ENCODE measurements at regions of chr1 and their contacts with region 1.

Region 1: GRCh38 chr1:236795035-236795756 is at the start of gene MTR:
- DNase-seq: peak; percentile 91 to 98 (median 95)
- ATAC-seq: peak; percentile 91
- H3K4me3 ChIP-seq: peak within 1 kb of the TSS; percentile 89
- H3K4me3 Mint-ChIP-seq: peak within 1 kb of the TSS; percentile 92
- H3K27ac ChIP-seq: peak within 1 kb of the TSS; percentile 88 to 99
- H3K27ac Mint-ChIP-seq: peak within 1 kb of the TSS; percentile 97
- H3K4me1 ChIP-seq: peaks cover 23% of the 10 kb centered on the region
- H3K4me1 Mint-ChIP-seq: peaks cover 48% of the 10 kb centered on the region
- H3K27me3 ChIP-seq: peaks cover 0 to 4% of the 10 kb centered on the region in 2 experiments
- H3K27me3 Mint-ChIP-seq: peaks cover 9% of the 10 kb centered on the region
- CTCF ChIP-seq: no peak
- total RNA-seq, gene MTR: 35.2 to 37.0 TPM

Region 2: DNA sequence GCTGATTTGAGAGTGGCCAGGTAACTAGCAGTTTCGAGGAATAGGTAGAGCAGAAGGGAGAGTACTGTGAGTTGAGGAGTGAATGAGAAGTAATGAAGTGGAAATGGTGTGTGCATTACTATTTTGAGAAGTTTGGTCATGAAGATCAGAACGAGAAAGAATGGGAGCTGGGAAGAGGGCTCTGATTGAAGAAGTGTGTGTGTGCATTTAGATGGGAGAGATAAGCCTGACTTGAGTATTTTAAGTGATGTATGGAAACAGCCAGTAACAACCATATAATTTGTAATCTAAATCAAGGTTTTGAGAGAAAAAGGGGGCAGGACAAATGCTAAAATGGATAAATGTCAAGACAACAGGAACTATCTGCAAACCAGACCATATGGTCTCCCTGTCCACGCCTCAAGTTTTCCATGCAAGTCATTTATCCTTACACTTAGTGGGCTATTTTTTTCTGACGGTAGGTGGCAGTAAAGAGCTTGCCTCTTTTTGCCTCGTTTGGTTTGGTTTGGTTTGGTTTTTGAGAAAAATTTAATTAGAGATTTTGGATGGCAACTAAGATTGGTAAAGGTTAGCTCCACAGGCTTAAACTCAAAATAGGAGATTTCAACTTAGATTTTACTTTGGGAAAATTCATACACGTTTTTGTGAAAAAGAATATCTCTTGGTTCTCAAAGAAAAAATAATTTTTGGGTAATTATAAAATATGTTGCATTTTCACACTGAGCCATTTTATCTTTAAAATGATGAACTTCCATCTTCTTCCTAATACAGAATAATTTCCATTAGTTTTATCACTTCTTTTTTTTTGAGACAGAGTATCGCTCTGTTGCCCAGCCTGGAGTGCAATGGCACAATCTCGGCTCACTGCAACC is 1281.5 kb before region 1 on chr1:
- CTCF ChIA-PET with region 1: no interaction called
- POLR2A ChIA-PET with region 1: no interaction called
- intact Hi-C with region 1: loop called in 1 of 2 experiments (anchors 10 kb)
- DNase-seq: peak in 6 of 14 experiments; percentile 5 to 82 (median 62)
- ATAC-seq: peak; percentile 68
- H3K4me3 ChIP-seq: no peak overlapping the region
- H3K4me3 Mint-ChIP-seq: no peak overlapping the region
- H3K27ac ChIP-seq: no peak overlapping the region
- H3K27ac Mint-ChIP-seq: no peak overlapping the region
- H3K4me1 ChIP-seq: no peaks in the 10 kb centered on the region
- H3K4me1 Mint-ChIP-seq: no peaks in the 10 kb centered on the region
- H3K27me3 ChIP-seq: no peaks in the 10 kb centered on the region
- H3K27me3 Mint-ChIP-seq: peaks cover 4% of the 10 kb centered on the region
- CTCF ChIP-seq: peak; percentile 91

Region 3: DNA sequence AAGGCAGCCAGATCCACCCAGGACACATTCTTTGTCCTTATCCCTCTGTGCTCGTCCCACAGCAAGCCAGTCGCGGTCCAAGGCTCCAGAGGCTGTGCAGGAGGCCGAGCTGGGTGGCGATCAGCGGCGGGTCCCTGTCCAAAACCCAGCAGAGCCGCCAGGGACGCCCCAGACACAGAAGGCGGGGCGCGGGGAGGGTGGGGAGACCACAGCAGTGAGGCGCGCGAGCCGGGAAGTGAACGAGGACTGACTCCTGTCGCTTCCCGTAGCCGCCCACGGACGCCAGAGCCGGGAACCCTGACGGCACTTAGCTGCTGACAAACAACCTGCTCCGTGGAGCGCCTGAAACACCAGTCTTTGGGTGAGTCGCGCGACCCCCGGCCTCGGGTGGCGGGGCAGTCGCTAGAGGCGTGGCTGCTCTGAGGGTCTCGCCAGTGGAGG is 271.5 kb before region 1 on chr1 and contains the start of gene LGALS8:
- CTCF ChIA-PET with region 1: no interaction called
- POLR2A ChIA-PET with region 1: interaction called, 3 read pairs
- intact Hi-C with region 1: loop called in 1 of 2 experiments (anchors 5 kb)
- DNase-seq: peak; percentile 73 to 92 (median 83)
- ATAC-seq: peak; percentile 80
- H3K4me3 ChIP-seq: peak within 1 kb of the TSS; percentile 82
- H3K4me3 Mint-ChIP-seq: peak within 1 kb of the TSS; percentile 99
- H3K27ac ChIP-seq: peak within 1 kb of the TSS; percentile 82 to 85
- H3K27ac Mint-ChIP-seq: peak within 1 kb of the TSS; percentile 97
- H3K4me1 ChIP-seq: peaks cover 12% of the 10 kb centered on the region
- H3K4me1 Mint-ChIP-seq: peaks cover 40% of the 10 kb centered on the region
- H3K27me3 ChIP-seq: no peaks in the 10 kb centered on the region
- H3K27me3 Mint-ChIP-seq: no peaks in the 10 kb centered on the region
- CTCF ChIP-seq: no peak
- total RNA-seq, gene LGALS8: 138 to 144 TPM

Region 4: DNA sequence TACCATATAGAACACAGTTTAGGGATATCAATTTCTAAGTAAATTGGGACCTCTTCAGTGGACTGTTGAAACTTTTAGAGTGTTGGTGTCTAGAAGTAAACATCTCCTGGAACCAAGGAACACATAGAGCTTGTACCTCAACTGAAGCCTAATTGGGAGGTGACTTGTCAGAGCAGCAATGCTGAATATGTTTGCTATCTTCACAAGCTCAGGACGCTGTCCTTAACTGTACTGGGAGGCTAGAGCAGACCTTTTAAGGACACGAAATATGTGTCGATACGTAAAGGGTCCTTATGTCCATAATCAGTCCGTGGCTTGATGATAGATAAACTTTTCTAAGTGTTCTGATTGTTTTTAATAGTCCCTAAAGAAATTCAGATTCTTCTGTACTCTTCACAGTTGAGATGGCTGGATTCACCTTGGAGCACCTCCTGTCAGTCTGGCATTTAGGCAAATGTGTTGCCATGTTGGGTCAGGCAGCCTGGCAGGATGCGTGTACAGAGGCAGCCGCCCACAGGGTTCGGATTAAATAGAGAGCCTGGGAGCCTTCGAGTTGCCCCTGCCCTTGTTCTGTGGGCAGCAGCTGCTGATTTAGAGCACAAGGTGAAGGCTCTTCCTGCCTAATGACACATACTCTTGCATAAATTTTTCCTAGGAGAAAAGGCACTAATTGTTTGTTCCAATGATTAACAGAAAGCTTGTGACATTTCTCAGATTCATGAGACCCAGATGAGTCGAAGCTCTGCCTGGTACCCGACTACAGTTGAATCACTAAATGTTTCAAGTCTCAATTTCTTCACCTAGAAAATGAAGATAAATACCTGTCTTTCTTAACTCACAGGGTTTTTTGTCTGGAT is 105.3 kb before region 1 on chr1:
- CTCF ChIA-PET with region 1: no interaction called
- POLR2A ChIA-PET with region 1: no interaction called
- intact Hi-C with region 1: loop called in 1 of 2 experiments (anchors 2 kb)
- DNase-seq: no peak
- ATAC-seq: no peak
- H3K4me3 ChIP-seq: no peak overlapping the region
- H3K4me3 Mint-ChIP-seq: no peak overlapping the region
- H3K27ac ChIP-seq: no peak overlapping the region
- H3K27ac Mint-ChIP-seq: no peak overlapping the region
- H3K4me1 ChIP-seq: peaks cover 17% of the 10 kb centered on the region
- H3K4me1 Mint-ChIP-seq: peaks cover 25% of the 10 kb centered on the region
- H3K27me3 ChIP-seq: peaks cover 23 to 56% of the 10 kb centered on the region in 2 experiments
- H3K27me3 Mint-ChIP-seq: peaks cover 76% of the 10 kb centered on the region
- CTCF ChIP-seq: no peak

Region 5: GRCh38 chr1:236808564-236809130 is 13.5 kb after region 1 on chr1:
- CTCF ChIA-PET with region 1: no interaction called
- POLR2A ChIA-PET with region 1: interaction called, 10 read pairs
- intact Hi-C with region 1: no loop called
- DNase-seq: no peak
- ATAC-seq: no peak
- H3K4me3 ChIP-seq: no peak overlapping the region
- H3K4me3 Mint-ChIP-seq: no peak overlapping the region
- H3K27ac ChIP-seq: no peak overlapping the region
- H3K27ac Mint-ChIP-seq: no peak overlapping the region
- H3K4me1 ChIP-seq: no peaks in the 10 kb centered on the region
- H3K4me1 Mint-ChIP-seq: peaks cover 11% of the 10 kb centered on the region
- H3K27me3 ChIP-seq: no peaks in the 10 kb centered on the region
- H3K27me3 Mint-ChIP-seq: no peaks in the 10 kb centered on the region
- CTCF ChIP-seq: no peak

Region 6: DNA sequence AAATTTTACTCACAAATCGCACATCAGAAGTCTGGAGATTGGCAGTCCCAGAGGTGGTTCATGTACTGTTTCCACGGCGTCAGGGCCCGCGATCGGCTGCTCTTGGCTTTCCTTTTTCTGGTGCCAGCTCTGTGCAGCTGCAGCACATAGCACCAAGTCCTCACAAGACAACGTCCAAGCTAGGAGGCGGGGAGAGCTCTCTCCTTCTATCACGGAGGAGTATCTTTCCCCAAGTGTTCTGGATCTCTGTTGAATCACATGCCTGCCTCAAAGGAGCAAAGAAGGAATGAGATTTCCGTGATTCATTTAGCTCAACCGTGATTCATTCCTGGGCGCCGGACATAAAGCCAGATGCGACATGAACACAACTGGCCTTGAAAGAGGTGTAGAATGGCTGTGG is 183.5 kb after region 1 on chr1:
- CTCF ChIA-PET with region 1: no interaction called
- POLR2A ChIA-PET with region 1: no interaction called
- intact Hi-C with region 1: no loop called
- DNase-seq: no peak
- ATAC-seq: no peak
- H3K4me3 ChIP-seq: no peak overlapping the region
- H3K4me3 Mint-ChIP-seq: no peak overlapping the region
- H3K27ac ChIP-seq: no peak overlapping the region
- H3K27ac Mint-ChIP-seq: no peak overlapping the region
- H3K4me1 ChIP-seq: no peaks in the 10 kb centered on the region
- H3K4me1 Mint-ChIP-seq: no peaks in the 10 kb centered on the region
- H3K27me3 ChIP-seq: no peaks in the 10 kb centered on the region
- H3K27me3 Mint-ChIP-seq: peaks cover 4% of the 10 kb centered on the region
- CTCF ChIP-seq: no peak

Measured in CD4-positive, alpha-beta T cell (primary cell).